T-cell (primary cell): ENCODE measurements at regions of chr2 and their contacts with region 1.

Region 1: GRCh38 chr2:139946693-139947092 is 1166.5 kb upstream of the NXPH2 start:
- DNase-seq: no peak
- ATAC-seq: no peak
- H3K4me3 ChIP-seq: no peak overlapping the region
- H3K4me3 Mint-ChIP-seq: no peak overlapping the region
- H3K27ac ChIP-seq: no peak overlapping the region
- H3K27ac Mint-ChIP-seq: no peak overlapping the region
- H3K4me1 ChIP-seq: no peaks in the 10 kb centered on the region
- H3K4me1 Mint-ChIP-seq: no peaks in the 10 kb centered on the region
- H3K27me3 ChIP-seq: no peaks in the 10 kb centered on the region
- H3K27me3 Mint-ChIP-seq: no peaks in the 10 kb centered on the region

Region 2: DNA sequence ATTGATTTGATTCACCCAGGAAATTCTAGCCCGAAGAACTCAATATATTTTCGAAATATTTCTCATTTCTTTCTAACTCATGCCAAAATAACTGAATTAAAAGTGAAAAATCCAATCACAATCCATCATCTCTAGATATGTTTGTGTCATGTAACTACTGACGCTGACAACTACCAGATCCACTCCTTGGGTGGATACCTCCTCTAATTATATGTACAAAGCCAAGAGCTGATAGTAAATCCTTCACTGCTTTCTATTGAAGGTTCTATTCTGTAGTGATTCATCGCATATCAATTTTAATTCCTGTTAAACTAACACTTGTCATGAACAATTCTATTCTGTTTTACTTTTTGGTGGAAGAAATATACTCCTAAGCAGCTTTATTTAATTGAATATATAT is 109.9 kb before region 1 on chr2:
- CTCF ChIA-PET with region 1: no interaction called
- POLR2A ChIA-PET with region 1: no interaction called
- DNase-seq: no peak
- ATAC-seq: no peak
- H3K4me3 ChIP-seq: no peak overlapping the region
- H3K4me3 Mint-ChIP-seq: no peak overlapping the region
- H3K27ac ChIP-seq: no peak overlapping the region
- H3K27ac Mint-ChIP-seq: no peak overlapping the region
- H3K4me1 ChIP-seq: no peaks in the 10 kb centered on the region
- H3K4me1 Mint-ChIP-seq: no peaks in the 10 kb centered on the region
- H3K27me3 ChIP-seq: no peaks in the 10 kb centered on the region
- H3K27me3 Mint-ChIP-seq: no peaks in the 10 kb centered on the region

Region 3: GRCh38 chr2:139963863-139964355 is 17.2 kb after region 1 on chr2:
- CTCF ChIA-PET with region 1: no interaction called
- POLR2A ChIA-PET with region 1: no interaction called
- DNase-seq: no peak
- ATAC-seq: no peak
- H3K4me3 ChIP-seq: no peak overlapping the region
- H3K4me3 Mint-ChIP-seq: no peak overlapping the region
- H3K27ac ChIP-seq: no peak overlapping the region
- H3K27ac Mint-ChIP-seq: no peak overlapping the region
- H3K4me1 ChIP-seq: no peaks in the 10 kb centered on the region
- H3K4me1 Mint-ChIP-seq: no peaks in the 10 kb centered on the region
- H3K27me3 ChIP-seq: no peaks in the 10 kb centered on the region
- H3K27me3 Mint-ChIP-seq: no peaks in the 10 kb centered on the region

Region 4: DNA sequence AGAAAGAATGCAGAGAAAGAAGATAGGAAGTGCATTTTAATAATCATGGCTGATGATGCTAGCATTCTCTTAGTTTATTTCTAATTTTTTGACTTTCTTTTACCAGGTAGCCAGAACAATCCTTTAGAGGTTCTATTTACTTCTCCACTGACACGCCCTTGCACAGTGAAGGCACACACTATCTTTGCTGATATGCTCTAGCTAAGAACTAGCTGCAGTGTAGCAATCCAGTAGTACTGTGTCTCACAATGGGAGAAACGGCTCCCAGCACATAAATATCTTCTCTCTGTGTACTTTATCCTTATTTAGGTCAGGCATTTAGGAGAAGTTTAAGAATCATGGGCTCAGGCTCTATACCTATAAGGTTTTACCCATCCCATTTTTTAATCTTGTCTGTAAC is 1178.7 kb after region 1 on chr2:
- CTCF ChIA-PET with region 1: no interaction called
- POLR2A ChIA-PET with region 1: interaction called in 1 of 2 experiments, 11 read pairs
- DNase-seq: no peak
- ATAC-seq: no peak
- H3K4me3 ChIP-seq: no peak overlapping the region
- H3K4me3 Mint-ChIP-seq: no peak overlapping the region
- H3K27ac ChIP-seq: no peak overlapping the region
- H3K27ac Mint-ChIP-seq: no peak overlapping the region
- H3K4me1 ChIP-seq: no peaks in the 10 kb centered on the region
- H3K4me1 Mint-ChIP-seq: no peaks in the 10 kb centered on the region
- H3K27me3 ChIP-seq: no peaks in the 10 kb centered on the region
- H3K27me3 Mint-ChIP-seq: no peaks in the 10 kb centered on the region